Activated CD8-positive, alpha-beta T cell treated with anti-CD3 and anti-CD28 coated beads for 36 hours (primary cell): ENCODE measurements at regions of chr19 and their contacts with region 1.

Region 1: GRCh38 chr19:34639491-34640085 is 37.4 kb downstream of the SCGB2B2 start:
- DNase-seq: peak; percentile 77
- ATAC-seq: peak; percentile 51
- H3K4me3 Mint-ChIP-seq: no peak overlapping the region
- H3K27ac Mint-ChIP-seq: no peak overlapping the region
- H3K4me1 Mint-ChIP-seq: no peaks in the 10 kb centered on the region
- H3K27me3 Mint-ChIP-seq: no peaks in the 10 kb centered on the region
- CTCF ChIP-seq: peak; percentile 91

Region 2: GRCh38 chr19:34577531-34578107 is 62.0 kb before region 1 on chr19:
- CTCF ChIA-PET with region 1: no interaction called
- POLR2A ChIA-PET with region 1: no interaction called
- intact Hi-C with region 1: no loop called
- DNase-seq: no peak
- ATAC-seq: no peak
- H3K4me3 Mint-ChIP-seq: no peak overlapping the region
- H3K27ac Mint-ChIP-seq: no peak overlapping the region
- H3K4me1 Mint-ChIP-seq: peaks cover 4% of the 10 kb centered on the region
- H3K27me3 Mint-ChIP-seq: peaks cover 17% of the 10 kb centered on the region
- CTCF ChIP-seq: no peak

Region 3: GRCh38 chr19:34654796-34655195 is 15.2 kb after region 1 on chr19:
- CTCF ChIA-PET with region 1: interaction called, 12 read pairs
- POLR2A ChIA-PET with region 1: no interaction called
- intact Hi-C with region 1: no loop called
- DNase-seq: no peak
- ATAC-seq: no peak
- H3K4me3 Mint-ChIP-seq: no peak overlapping the region
- H3K27ac Mint-ChIP-seq: no peak overlapping the region
- H3K4me1 Mint-ChIP-seq: no peaks in the 10 kb centered on the region
- H3K27me3 Mint-ChIP-seq: peaks cover 7% of the 10 kb centered on the region
- CTCF ChIP-seq: no peak

Region 4: DNA sequence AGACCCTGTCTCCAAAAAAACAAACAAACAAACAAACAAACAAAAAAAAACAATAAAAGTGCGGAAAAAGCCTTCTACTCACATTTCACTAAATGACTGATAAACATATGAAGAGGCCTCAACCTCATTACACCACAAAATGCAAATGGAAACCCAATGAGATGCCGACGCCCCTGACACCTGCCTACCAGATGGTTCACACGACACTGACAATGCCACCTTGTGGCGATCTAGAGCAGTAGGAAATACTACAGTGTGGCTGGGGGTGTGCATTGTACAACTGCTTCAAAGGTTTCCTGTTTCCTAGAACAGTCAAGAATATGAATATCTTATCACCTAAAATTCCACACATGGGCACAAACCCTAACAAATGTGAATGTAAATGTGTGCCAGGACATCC is 23.3 kb after region 1 on chr19:
- CTCF ChIA-PET with region 1: interaction called, 38 read pairs
- POLR2A ChIA-PET with region 1: no interaction called
- intact Hi-C with region 1: no loop called
- DNase-seq: peak; percentile 71
- ATAC-seq: peak; percentile 97
- H3K4me3 Mint-ChIP-seq: no peak overlapping the region
- H3K27ac Mint-ChIP-seq: peak overlapping the region; percentile 59
- H3K4me1 Mint-ChIP-seq: peaks cover 21% of the 10 kb centered on the region
- H3K27me3 Mint-ChIP-seq: peaks cover under 1% of the 10 kb centered on the region
- CTCF ChIP-seq: peak; percentile 68

Region 5: DNA sequence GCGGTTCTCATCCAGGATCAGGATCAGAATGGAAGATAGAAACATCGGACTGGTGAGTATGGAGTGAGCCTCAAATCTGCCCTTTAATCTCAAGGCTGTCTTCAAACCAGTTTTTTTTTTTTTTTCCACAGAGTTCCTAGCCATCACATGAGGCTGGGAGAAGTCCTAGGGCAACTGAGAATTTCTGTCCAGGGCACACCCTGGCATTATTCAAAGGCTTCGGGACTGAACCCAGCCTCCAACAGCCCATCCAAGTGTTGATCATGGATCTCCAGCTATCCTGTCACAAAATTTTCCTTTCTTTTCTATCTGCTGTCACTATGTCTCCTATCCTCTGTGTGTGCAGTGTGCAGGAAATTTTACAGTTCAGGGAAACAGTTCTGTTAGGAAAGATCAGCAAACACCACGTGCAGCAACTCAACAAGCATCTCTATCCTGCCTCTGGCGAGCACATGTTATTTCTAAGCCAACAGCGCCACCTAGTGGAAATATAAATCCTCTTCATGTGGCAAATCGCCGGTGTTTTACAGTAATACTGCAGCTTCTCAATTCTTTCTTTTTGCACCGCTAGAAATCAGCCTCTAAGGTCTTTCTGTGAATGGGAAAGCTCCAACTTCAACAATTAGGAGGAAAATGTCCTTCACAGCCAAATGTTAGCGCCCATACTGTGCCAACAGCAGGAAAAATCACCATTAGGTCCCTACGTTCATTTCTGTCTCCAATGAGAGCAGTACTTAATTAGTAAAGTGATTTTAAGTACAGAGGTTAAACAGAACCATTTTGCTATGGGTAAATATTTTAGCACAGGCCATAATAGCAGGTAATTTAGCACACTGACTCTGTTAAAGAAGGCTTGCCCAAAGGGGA is 73.0 kb after region 1 on chr19:
- CTCF ChIA-PET with region 1: interaction called, 78 read pairs
- POLR2A ChIA-PET with region 1: no interaction called
- intact Hi-C with region 1: loop called (anchors 1 kb)
- DNase-seq: peak; percentile 69
- ATAC-seq: peak; percentile 56
- H3K4me3 Mint-ChIP-seq: no peak overlapping the region
- H3K27ac Mint-ChIP-seq: no peak overlapping the region
- H3K4me1 Mint-ChIP-seq: peaks cover 2% of the 10 kb centered on the region
- H3K27me3 Mint-ChIP-seq: peaks cover 19% of the 10 kb centered on the region
- CTCF ChIP-seq: peak; percentile 72

Region 6: DNA sequence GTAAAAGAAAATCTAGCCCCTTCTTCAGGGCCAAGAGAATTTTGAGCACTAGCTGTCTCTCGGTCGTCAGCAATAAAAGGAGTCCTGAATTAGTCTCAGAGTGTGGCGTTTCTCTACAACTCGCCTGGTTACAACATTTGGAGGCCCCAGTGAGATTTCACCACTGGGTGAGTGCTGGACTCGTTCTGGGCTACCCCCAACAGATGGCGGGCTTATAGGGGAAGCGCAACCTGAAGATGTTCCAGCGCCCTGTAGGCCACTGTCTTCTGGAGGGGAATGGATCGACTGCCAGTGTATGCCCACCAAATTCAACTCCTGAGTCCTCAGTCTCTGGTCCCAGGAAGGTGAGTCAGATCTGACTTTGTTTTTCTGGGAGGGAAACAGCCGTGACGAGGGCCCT is 82.8 kb after region 1 on chr19:
- CTCF ChIA-PET with region 1: interaction called, 13 read pairs
- POLR2A ChIA-PET with region 1: no interaction called
- intact Hi-C with region 1: no loop called
- DNase-seq: no peak
- ATAC-seq: no peak
- H3K4me3 Mint-ChIP-seq: no peak overlapping the region
- H3K27ac Mint-ChIP-seq: no peak overlapping the region
- H3K4me1 Mint-ChIP-seq: no peaks in the 10 kb centered on the region
- H3K27me3 Mint-ChIP-seq: peaks cover 13% of the 10 kb centered on the region
- CTCF ChIP-seq: no peak